Mammary epithelial cell (primary cell): ENCODE measurements at regions of chr10 and their contacts with region 1.

Region 1: DNA sequence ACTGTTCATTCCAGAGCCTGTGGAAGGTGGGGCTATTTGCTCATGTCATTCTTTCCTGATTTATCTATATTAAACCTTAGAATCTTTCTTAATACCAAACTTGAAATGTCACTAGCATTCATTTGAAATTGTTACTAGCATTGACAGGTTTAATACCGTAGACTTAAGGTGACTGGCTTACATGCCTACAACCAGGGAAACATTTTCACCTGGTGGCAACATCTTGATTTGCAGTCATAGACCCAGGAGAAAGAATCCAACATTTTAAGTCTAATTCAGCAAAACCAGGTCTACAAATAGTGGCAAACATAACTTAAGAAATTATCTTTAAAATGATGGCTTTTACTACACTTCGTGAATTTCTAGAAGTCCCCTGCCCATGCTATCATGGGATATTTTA is 353.7 kb downstream of the HTR7 start:
- DNase-seq: no peak
- H3K4me3 ChIP-seq: no peak overlapping the region
- H3K27ac ChIP-seq: no peak overlapping the region
- H3K4me1 ChIP-seq: no peaks in the 10 kb centered on the region
- H3K27me3 ChIP-seq: no peaks in the 10 kb centered on the region
- CTCF ChIP-seq: peak in 1 of 2 donors; percentile 4

Region 2: DNA sequence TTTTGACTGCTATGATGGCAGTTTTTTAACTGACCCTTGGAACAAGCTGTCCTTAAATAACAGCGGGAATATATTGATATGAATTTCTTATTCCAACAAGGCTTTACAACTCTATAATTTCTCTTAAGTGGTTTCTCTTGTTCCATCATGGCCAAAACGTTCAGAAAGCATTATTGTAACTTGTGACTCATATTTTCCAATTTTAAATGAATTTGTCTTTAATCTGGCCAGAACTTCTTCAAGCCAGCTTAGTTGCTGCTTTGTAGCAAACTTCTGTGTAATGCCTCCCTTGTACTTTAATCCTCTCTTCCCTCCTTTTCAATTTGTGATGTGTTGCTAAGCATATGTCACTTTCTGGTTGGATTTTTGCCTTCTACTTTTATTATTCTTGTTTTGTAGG is 530.8 kb before region 1 on chr10:
- CTCF ChIA-PET with region 1: no interaction called
- dilution Hi-C with region 1: no loop called
- in situ Hi-C with region 1: no loop called
- intact Hi-C with region 1: no loop called
- DNase-seq: no peak
- H3K4me3 ChIP-seq: no peak overlapping the region
- H3K27ac ChIP-seq: no peak overlapping the region
- H3K4me1 ChIP-seq: peaks cover 9% of the 10 kb centered on the region
- H3K27me3 ChIP-seq: no peaks in the 10 kb centered on the region
- CTCF ChIP-seq: no peak

Region 3: GRCh38 chr10:90418869-90419652 is 85.1 kb before region 1 on chr10:
- CTCF ChIA-PET with region 1: no interaction called
- dilution Hi-C with region 1: no loop called
- in situ Hi-C with region 1: no loop called
- intact Hi-C with region 1: no loop called
- DNase-seq: peak; percentile 91
- H3K4me3 ChIP-seq: no peak overlapping the region
- H3K27ac ChIP-seq: peak overlapping the region; percentile 94
- H3K4me1 ChIP-seq: peaks cover 45% of the 10 kb centered on the region
- H3K27me3 ChIP-seq: no peaks in the 10 kb centered on the region
- CTCF ChIP-seq: no peak

Region 4: GRCh38 chr10:91220194-91220953 is 716.2 kb after region 1 on chr10 and contains the start of gene PCGF5:
- CTCF ChIA-PET with region 1: interaction called, 11 read pairs
- dilution Hi-C with region 1: no loop called
- in situ Hi-C with region 1: no loop called
- intact Hi-C with region 1: no loop called
- DNase-seq: peak; percentile 86
- H3K4me3 ChIP-seq: peak within 1 kb of the TSS; percentile 86 to 90 (median 86)
- H3K27ac ChIP-seq: peak within 1 kb of the TSS; percentile 58
- H3K4me1 ChIP-seq: peaks cover 16% of the 10 kb centered on the region
- H3K27me3 ChIP-seq: no peaks in the 10 kb centered on the region
- CTCF ChIP-seq: peak in 1 of 2 donors; percentile 42
- total RNA-seq, gene PCGF5: 17.6 to 22.5 TPM